GM10248 (cell line): ENCODE measurements at regions of chr11 and their contacts with region 1.

Region 1: DNA sequence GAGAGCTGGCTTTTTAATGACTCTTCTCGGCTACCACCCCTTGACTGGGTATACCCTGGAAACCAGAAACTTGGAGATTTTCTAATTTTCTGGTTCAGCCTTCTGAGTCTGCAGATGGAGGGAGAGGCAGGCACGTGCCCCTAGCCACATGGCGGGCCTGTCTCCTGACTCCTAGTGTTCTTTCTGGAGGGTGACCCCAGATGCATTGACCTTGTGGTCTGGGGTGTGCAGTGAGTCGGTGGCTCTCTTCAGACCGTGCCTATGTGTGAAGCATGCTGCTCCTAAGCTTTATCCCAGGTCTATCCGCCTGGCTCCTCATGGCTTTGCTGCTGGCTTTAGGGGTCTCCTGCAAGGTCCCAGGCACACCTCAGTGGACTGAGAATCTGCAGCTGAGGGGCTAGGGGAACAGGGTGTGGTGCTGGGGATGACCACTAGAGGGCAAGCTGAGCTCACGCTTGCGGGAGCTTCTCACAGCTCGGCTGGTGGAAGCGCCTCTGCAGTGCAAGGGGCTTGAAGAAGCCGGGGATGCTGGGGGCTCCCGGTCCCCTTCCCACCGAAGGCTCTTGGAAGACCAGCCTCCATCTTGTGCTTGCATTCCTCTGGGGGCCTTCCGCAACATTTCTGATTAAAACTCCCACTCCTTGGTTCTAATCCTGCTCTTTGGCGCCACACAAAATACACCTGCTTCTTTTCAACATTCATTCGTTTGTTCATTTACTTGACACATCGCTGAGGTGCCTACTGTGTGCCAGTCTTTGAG is 51.8 kb downstream of the OTOG start:
- DNase-seq: peak; percentile 79
- CTCF ChIP-seq: peak; percentile 99

Region 2: GRCh38 chr11:17575431-17576425 is 23.2 kb before region 1 on chr11:
- CTCF ChIA-PET with region 1: interaction called, 11 read pairs
- POLR2A ChIA-PET with region 1: no interaction called
- DNase-seq: no peak
- CTCF ChIP-seq: no peak

Region 3: DNA sequence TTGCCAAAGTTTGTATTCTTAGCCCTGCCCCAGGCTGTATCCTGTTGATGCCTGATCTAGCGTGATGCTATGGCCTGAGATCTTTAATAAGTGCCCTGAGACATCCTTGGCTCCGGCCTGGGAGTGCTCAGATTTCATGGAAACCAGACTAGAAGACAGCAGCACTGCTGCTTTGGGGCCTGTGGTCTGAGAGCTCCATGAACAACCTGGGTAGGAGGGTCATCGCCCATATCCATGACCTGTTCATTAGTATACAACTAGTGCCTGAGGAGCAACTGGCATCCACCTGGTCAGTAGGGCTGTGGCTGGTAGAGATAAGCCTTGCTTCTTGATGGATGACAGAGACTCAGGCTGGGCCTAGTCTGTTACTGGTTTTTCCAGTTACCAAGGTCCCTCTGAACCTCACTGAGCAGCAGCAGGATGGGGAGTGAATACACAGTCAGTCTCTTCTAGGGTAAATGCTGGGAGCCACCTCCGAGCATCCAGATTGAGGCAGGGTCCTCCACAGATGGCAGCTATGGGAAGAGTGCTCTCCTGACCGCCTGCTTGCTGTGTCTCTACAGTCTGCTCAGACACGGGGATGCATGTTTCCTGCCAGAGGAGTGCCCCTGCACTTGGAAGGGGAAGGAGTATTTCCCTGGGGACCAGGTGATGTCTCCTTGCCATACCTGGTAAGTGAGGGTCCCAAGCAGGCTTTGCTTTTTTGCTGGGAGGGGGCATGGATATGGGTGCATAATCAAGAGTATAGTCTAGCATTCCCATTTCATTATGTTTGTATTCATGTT is 12.8 kb before region 1 on chr11:
- CTCF ChIA-PET with region 1: interaction called, 16 read pairs
- POLR2A ChIA-PET with region 1: no interaction called
- DNase-seq: no peak
- CTCF ChIP-seq: no peak